ENCODE measurements at regions of chr2 and their contacts with region 1.

Region 1: DNA sequence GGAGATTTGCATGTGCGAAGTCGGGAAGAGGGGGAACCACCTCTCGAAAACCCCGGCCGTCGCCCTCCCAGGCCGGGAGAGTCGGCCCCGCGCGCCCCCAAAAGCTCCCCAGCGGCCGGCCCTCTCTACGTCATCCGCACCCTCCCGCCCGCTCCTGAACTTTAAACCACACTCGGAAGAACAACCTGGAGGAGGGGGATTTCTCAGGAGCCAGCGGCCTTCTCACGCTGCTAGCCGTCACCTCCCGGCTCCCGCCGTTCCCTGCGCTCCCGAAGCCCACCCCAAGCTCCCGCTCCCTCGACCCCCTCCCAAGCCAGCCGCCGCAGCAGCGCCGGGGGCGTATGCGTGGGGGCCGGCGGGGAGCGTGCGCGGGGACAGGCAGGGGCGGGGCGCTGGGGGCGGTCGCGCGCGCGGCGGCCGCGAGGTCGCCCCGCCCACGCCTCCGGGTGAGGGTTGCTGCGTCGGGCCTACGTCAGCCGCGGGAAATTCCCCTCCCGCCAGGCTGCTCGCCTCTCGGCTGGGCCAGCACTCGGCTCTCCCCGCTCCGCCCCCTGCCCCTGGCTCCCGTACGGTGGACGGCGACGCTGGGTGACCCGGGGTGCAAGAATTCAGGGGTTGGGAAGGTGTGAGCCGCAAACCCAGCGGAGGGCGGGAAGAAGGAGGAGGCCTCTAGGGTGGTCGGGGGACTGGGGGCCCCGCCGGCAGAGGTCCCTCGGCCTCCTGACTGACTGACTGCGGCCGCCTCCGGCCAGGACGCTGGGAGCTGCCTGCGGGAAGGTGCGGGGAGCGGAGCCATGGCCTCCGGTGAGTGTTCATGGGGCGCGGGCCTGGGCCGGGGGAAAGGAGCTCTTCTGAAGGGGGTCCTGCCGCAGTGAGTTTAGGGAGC is at the start of gene REL:
- DNase-seq: peak; percentile 80 to 98 (median 89)
- ATAC-seq: peak; percentile 78
- H3K4me3 ChIP-seq: peak within 1 kb of the TSS; percentile 85 to 99
- H3K4me3 Mint-ChIP-seq: peak within 1 kb of the TSS; percentile 93
- H3K27ac ChIP-seq: peak within 1 kb of the TSS; percentile 97 to 100
- H3K27ac Mint-ChIP-seq: peak within 1 kb of the TSS; percentile 99
- H3K4me1 ChIP-seq: peaks cover 34% of the 10 kb centered on the region
- H3K4me1 Mint-ChIP-seq: peaks cover 30% of the 10 kb centered on the region
- H3K27me3 ChIP-seq: no peaks in the 10 kb centered on the region
- H3K27me3 Mint-ChIP-seq: no peaks in the 10 kb centered on the region
- CTCF ChIP-seq: no peak
- total RNA-seq, gene REL: 202 to 205 TPM

Region 2: DNA sequence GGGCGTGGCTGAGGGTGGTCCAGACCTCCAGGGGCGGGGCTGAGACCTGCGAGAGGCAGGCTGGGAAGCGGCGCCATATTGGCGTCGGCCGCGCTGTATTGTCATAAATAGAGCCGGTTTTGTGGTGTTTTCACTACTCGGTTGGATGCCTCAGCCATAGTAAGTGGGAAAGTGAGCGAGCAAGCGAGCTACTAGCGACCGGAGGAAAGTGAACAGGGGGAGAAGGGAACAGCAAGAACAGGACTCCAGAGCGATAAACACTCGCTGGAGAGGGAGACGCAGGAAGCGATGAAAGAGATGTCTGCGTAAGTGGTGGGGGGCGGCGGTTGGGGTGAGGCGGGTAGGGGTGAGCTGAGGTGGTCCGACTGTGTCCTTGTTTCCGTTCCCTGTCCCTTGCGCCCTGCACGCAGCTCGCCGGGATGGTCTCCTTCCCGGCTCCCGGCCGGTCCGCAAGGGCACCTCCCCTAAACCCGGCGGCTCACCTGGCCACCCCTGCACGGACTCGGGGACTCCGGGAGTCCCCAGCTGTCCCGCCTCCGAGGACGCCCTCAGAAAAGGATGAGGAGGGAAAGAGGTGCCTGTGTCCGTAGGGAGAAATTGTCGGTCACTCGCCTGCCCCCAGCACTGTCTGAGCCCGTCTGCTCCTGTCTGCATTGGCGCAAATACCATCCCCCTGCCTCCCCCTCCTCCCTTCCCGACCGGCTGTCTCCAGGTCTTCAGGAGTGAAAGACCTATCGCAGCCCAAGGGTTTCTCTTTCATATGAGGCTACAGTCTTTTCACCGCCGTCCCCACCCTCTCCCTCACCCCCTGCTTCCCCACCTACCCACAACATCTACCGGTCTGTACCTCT is 124.9 kb before region 1 on chr2 and contains the start of gene PAPOLG:
- CTCF ChIA-PET with region 1: no interaction called
- POLR2A ChIA-PET with region 1: no interaction called
- intact Hi-C with region 1: loop called (anchors 1 to 2 kb)
- DNase-seq: peak; percentile 94 to 98 (median 97)
- ATAC-seq: peak; percentile 98
- H3K4me3 ChIP-seq: peak within 1 kb of the TSS; percentile 85 to 98
- H3K4me3 Mint-ChIP-seq: peak within 1 kb of the TSS; percentile 100
- H3K27ac ChIP-seq: peak within 1 kb of the TSS; percentile 86 to 91
- H3K27ac Mint-ChIP-seq: peak within 1 kb of the TSS; percentile 100
- H3K4me1 ChIP-seq: peaks cover 20% of the 10 kb centered on the region
- H3K4me1 Mint-ChIP-seq: peaks cover 43% of the 10 kb centered on the region
- H3K27me3 ChIP-seq: no peaks in the 10 kb centered on the region
- H3K27me3 Mint-ChIP-seq: no peaks in the 10 kb centered on the region
- CTCF ChIP-seq: no peak
- total RNA-seq, gene PAPOLG: 19.1 to 22.3 TPM

Region 3: GRCh38 chr2:60852282-60852860 is 28.9 kb before region 1 on chr2:
- CTCF ChIA-PET with region 1: no interaction called
- POLR2A ChIA-PET with region 1: no interaction called
- intact Hi-C with region 1: no loop called
- DNase-seq: no peak
- ATAC-seq: no peak
- H3K4me3 ChIP-seq: no peak overlapping the region
- H3K4me3 Mint-ChIP-seq: no peak overlapping the region
- H3K27ac ChIP-seq: no peak overlapping the region
- H3K27ac Mint-ChIP-seq: no peak overlapping the region
- H3K4me1 ChIP-seq: no peaks in the 10 kb centered on the region
- H3K4me1 Mint-ChIP-seq: no peaks in the 10 kb centered on the region
- H3K27me3 ChIP-seq: no peaks in the 10 kb centered on the region
- H3K27me3 Mint-ChIP-seq: no peaks in the 10 kb centered on the region
- CTCF ChIP-seq: no peak

Region 4: DNA sequence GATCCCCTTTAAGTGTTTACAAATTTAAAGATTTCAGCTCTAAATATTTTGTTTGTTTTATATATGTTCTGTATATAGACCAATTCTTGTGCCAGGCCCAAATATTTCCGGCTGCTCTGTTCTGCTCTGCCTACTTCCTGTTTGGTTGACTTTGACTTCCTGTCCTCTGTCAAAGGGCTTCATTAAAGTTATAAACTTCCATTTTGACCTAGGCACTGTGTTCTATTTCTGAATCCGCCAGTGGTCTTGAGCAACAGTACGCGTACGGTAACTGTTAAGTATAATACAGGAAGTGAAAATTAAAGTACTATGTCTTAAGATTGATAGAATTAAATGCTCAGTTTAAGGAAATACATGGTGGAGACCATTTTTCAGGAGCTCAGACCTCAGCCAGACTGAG is 13.4 kb before region 1 on chr2:
- CTCF ChIA-PET with region 1: interaction called, 3 read pairs
- POLR2A ChIA-PET with region 1: interaction called, 22 read pairs
- intact Hi-C with region 1: loop called in 1 of 2 experiments (anchors 1 kb)
- DNase-seq: peak in 7 of 9 experiments; percentile 7 to 76 (median 24)
- ATAC-seq: peak; percentile 90
- H3K4me3 ChIP-seq: no peak overlapping the region
- H3K4me3 Mint-ChIP-seq: peak overlapping the region; percentile 32
- H3K27ac ChIP-seq: peak overlapping the region in 1 of 2 experiments; percentile 69
- H3K27ac Mint-ChIP-seq: peak overlapping the region; percentile 91
- H3K4me1 ChIP-seq: peaks cover 15% of the 10 kb centered on the region
- H3K4me1 Mint-ChIP-seq: peaks cover 20% of the 10 kb centered on the region
- H3K27me3 ChIP-seq: peaks cover 0 to 3% of the 10 kb centered on the region in 2 experiments
- H3K27me3 Mint-ChIP-seq: no peaks in the 10 kb centered on the region
- CTCF ChIP-seq: no peak

Region 5: GRCh38 chr2:60998628-60999545 is 117.6 kb after region 1 on chr2:
- CTCF ChIA-PET with region 1: interaction called, 15 read pairs
- POLR2A ChIA-PET with region 1: interaction called, 5 read pairs
- intact Hi-C with region 1: loop called (anchors 5 kb)
- DNase-seq: peak in 3 of 9 experiments; percentile 40 to 77 (median 70)
- ATAC-seq: peak; percentile 91
- H3K4me3 ChIP-seq: no peak overlapping the region
- H3K4me3 Mint-ChIP-seq: no peak overlapping the region
- H3K27ac ChIP-seq: no peak overlapping the region
- H3K27ac Mint-ChIP-seq: no peak overlapping the region
- H3K4me1 ChIP-seq: no peaks in the 10 kb centered on the region
- H3K4me1 Mint-ChIP-seq: no peaks in the 10 kb centered on the region
- H3K27me3 ChIP-seq: no peaks in the 10 kb centered on the region
- H3K27me3 Mint-ChIP-seq: no peaks in the 10 kb centered on the region
- CTCF ChIP-seq: peak; percentile 87

Region 6: DNA sequence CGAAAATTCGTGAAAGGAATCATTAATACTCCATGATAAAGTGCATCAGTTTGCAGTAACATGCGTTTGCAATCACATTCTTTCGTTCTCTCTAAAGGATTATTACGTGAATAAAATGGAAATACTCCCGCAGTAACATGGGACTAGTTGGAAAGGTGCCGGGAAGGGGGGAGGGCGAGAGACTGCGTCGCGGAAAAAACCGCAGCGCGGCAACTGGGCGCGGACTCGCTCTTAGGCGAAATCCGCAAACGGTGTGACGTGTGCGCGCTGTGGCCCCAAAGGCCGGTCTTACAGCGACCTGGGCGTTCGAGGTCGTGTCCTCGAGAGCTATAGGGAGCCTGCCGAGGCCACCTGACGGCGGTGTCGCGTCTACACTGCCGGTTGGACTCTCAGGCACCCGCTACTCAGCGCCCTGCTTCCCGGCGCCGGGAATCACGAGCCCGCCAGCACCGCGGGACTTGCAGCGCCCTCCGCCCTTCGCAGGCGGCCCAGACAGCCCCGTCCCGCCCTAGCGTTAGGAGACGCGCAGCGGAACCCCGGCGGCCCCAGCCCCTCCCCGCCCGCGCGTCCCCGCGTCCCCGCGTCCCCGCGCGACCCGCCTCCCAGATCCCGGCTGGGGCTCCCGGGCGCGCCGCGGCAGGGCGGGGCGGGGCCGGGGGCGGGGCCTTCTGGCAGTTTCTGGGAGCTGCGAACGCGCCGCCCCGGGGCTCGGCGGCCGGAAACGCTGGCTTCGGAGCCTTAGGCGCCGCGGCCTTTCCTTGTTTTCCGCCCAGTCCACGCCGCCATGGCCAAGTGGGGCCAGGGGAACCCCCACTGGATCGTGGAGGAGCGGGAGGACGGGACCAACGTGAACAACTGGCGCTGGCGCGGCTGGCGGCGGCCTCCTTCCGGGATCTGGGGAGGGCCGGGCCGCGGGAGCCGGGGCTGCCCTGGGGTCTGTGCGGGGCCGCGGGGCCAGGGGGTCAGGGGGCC is 295.8 kb after region 1 on chr2:
- CTCF ChIA-PET with region 1: no interaction called
- POLR2A ChIA-PET with region 1: no interaction called
- intact Hi-C with region 1: loop called (anchors 1 to 5 kb)
- DNase-seq: peak; percentile 88 to 95 (median 94)
- ATAC-seq: peak; percentile 88
- H3K4me3 ChIP-seq: peak overlapping the region; percentile 74 to 87
- H3K4me3 Mint-ChIP-seq: peak overlapping the region; percentile 94
- H3K27ac ChIP-seq: peak overlapping the region; percentile 80 to 95
- H3K27ac Mint-ChIP-seq: peak overlapping the region; percentile 95
- H3K4me1 ChIP-seq: peaks cover 45% of the 10 kb centered on the region
- H3K4me1 Mint-ChIP-seq: peaks cover 52% of the 10 kb centered on the region
- H3K27me3 ChIP-seq: no peaks in the 10 kb centered on the region
- H3K27me3 Mint-ChIP-seq: no peaks in the 10 kb centered on the region
- CTCF ChIP-seq: no peak

Region 7: DNA sequence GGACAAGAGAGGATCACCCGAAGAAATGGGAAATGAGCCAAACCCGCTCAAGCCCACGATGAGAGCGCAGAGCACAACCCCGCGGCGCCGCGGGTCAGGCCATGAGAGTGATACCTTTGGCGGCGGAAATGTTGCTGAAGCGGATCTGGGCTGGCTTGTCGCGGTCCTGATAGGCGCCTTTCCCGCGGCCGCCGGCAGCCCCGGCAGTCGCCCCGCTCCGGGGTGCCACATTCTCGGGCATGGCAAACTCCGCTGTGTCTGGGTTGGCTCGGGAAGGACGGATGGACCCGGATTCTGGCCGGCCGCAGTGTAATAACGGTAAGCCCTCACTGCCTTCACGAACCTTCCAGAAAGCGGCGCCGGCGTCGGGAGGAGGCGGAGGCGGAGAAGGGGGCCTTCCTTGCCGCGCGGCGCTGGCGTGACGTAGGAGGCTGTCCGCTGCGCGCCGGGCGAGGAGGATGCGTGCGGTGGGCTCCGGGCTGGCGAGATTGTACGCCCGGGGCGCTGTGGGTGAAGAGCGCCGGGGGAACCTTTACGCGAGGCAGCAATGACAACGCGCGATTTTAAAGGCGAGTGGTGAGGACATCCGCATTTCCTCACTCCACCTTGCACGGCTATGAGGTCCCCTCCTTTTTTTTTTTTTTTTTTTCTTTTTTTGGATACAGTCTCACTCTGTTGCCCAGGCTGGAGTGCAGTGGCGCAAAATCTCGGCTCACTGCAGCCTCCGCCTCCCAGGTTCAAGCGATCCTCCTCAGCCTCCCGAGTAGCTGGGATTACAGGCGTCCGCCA is 1007.2 kb after region 1 on chr2 and contains the start of gene CCT4:
- CTCF ChIA-PET with region 1: no interaction called
- POLR2A ChIA-PET with region 1: no interaction called
- intact Hi-C with region 1: loop called in 1 of 2 experiments (anchors 10 kb)
- DNase-seq: peak; percentile 81 to 98 (median 92)
- ATAC-seq: peak; percentile 89
- H3K4me3 ChIP-seq: peak within 1 kb of the TSS; percentile 85 to 100
- H3K4me3 Mint-ChIP-seq: peak within 1 kb of the TSS; percentile 95
- H3K27ac ChIP-seq: peak within 1 kb of the TSS; percentile 99
- H3K27ac Mint-ChIP-seq: peak within 1 kb of the TSS; percentile 98
- H3K4me1 ChIP-seq: peaks cover 28% of the 10 kb centered on the region
- H3K4me1 Mint-ChIP-seq: peaks cover 33% of the 10 kb centered on the region
- H3K27me3 ChIP-seq: no peaks in the 10 kb centered on the region
- H3K27me3 Mint-ChIP-seq: no peaks in the 10 kb centered on the region
- CTCF ChIP-seq: no peak
- total RNA-seq, gene CCT4: 102 to 106 TPM